ENCODE measurements at regions of chr16 and their contacts with region 1.

Region 1: DNA sequence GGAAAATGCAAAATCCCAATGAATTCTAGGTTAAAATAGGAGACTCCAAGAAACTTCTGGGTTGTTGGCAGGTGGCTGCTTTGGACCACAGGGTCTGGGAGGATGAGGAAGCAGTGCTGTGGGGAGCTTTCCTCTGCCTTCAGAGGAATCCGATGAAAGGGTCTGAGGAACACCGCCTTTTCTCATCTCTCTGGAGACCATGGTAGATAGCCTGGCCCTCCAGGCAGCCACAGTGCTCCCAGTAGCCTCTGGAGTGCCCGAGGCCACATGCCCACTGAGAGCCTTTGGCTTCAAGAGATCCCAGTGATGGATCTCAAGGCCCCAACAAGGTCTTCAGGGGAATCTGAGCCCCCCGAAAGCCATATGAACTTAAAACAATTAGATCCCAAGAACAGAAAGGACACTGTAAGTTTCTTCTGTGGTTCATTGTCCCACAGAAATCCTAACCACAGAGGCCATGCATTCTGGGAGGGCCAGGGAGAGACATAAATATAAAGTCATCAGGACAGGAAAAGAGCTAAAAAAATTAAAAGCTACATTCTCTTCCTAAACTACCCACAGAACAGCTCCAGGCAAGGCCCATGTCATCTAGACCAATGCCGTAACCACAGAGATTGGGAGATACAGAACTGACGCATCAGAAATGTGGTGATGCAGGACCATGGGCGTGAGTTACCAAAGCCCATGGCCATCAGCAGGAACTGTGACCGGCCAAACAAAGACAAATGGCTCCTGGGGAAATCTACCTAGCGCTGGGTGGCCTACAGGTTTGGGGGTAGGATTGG is 24.3 kb downstream of the TK2 start:
- DNase-seq: peak in 1 of 10 donors; percentile 15
- H3K4me3 ChIP-seq: no peak overlapping the region
- H3K27ac ChIP-seq: peak overlapping the region in 40 of 59 donors; percentile 0 to 99 (median 50)
- H3K27me3 ChIP-seq: no peaks in the 10 kb centered on the region
- CTCF ChIP-seq: no peak

Region 2: GRCh38 chr16:66541388-66542355 is 16.1 kb after region 1 on chr16:
- intact Hi-C with region 1: loop called in 1 of 2 experiments (anchors 2 kb)
- DNase-seq: no peak
- H3K4me3 ChIP-seq: no peak overlapping the region
- H3K27ac ChIP-seq: peak overlapping the region in 1 of 59 donors; percentile 10
- H3K27me3 ChIP-seq: no peaks in the 10 kb centered on the region
- CTCF ChIP-seq: no peak

Region 3: DNA sequence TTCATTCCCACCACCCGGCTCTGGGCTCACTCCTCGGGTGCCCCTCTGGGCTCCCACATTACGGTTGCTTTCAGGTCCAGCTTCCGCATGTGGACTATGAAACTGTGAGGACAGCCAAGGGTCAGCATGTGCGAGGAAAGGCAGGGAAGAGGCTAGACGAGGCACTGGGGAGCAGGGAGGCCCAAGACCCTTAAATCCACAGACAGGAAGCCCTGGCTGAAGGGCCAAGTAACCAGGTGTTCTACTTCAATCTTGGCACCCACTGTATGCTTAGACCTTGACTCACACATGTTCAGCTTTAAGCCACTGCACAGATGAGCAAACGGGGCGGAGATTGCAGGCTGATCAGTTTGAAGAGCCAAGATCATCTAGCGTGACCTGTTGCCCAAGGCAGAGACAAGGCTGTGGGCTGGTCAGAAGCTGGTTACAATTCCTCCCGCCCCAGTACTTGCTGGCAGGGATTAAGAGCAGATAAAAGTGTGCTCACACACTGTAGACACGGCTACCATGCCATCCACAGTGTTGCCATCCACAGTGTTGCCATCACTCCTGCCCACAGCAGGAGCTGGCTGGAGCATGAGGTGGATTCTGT is 462.7 kb after region 1 on chr16 and contains the start of gene CES4A:
- intact Hi-C with region 1: no loop called
- DNase-seq: no peak
- H3K4me3 ChIP-seq: no peak within 1 kb of the TSS
- H3K27ac ChIP-seq: peak within 1 kb of the TSS in 18 of 59 donors; percentile 8 to 60 (median 33)
- H3K27me3 ChIP-seq: no peaks in the 10 kb centered on the region
- CTCF ChIP-seq: no peak
- total RNA-seq, gene CES4A: 46.0 to 216 (median 110) TPM